ENCODE measurements at regions of chr17 and their contacts with region 1.

Region 1: GRCh38 chr17:75012346-75013091 is at the start of gene MRPL58:
- DNase-seq: peak; percentile 79
- H3K4me3 ChIP-seq: peak within 1 kb of the TSS; percentile 75 to 86 (median 83)
- H3K27ac ChIP-seq: peak within 1 kb of the TSS; percentile 79
- H3K4me1 ChIP-seq: peaks cover 19% of the 10 kb centered on the region
- H3K27me3 ChIP-seq: no peaks in the 10 kb centered on the region
- CTCF ChIP-seq: peak; percentile 13 to 67
- total RNA-seq, gene MRPL58: 22.2 to 43.2 TPM

Region 2: GRCh38 chr17:74987909-74988711 is 24.4 kb before region 1 on chr17:
- CTCF ChIA-PET with region 1: interaction called, 4 read pairs
- dilution Hi-C with region 1: no loop called
- in situ Hi-C with region 1: no loop called
- intact Hi-C with region 1: loop called (anchors 1 kb)
- DNase-seq: peak; percentile 73
- H3K4me3 ChIP-seq: peak overlapping the region; percentile 83 to 92 (median 84)
- H3K27ac ChIP-seq: peak overlapping the region; percentile 72
- H3K4me1 ChIP-seq: peaks cover 44% of the 10 kb centered on the region
- H3K27me3 ChIP-seq: no peaks in the 10 kb centered on the region
- CTCF ChIP-seq: peak in 1 of 2 donors; percentile 49

Region 3: GRCh38 chr17:74994476-74994875 is 18.0 kb before region 1 on chr17:
- CTCF ChIA-PET with region 1: interaction called, 4 read pairs
- dilution Hi-C with region 1: no loop called
- in situ Hi-C with region 1: no loop called
- intact Hi-C with region 1: loop called (anchors 1 kb)
- DNase-seq: peak; percentile 77
- H3K4me3 ChIP-seq: no peak overlapping the region
- H3K27ac ChIP-seq: peak overlapping the region; percentile 91
- H3K4me1 ChIP-seq: peaks cover 58% of the 10 kb centered on the region
- H3K27me3 ChIP-seq: no peaks in the 10 kb centered on the region
- CTCF ChIP-seq: no peak

Region 4: GRCh38 chr17:75034236-75034908 is 21.9 kb after region 1 on chr17:
- CTCF ChIA-PET with region 1: no interaction called
- dilution Hi-C with region 1: no loop called
- in situ Hi-C with region 1: no loop called
- intact Hi-C with region 1: loop called (anchors 1 kb)
- DNase-seq: peak; percentile 91
- H3K4me3 ChIP-seq: peak overlapping the region; percentile 57 to 85 (median 65)
- H3K27ac ChIP-seq: peak overlapping the region; percentile 86
- H3K4me1 ChIP-seq: peaks cover 15% of the 10 kb centered on the region
- H3K27me3 ChIP-seq: no peaks in the 10 kb centered on the region
- CTCF ChIP-seq: peak in 1 of 2 donors; percentile 36

Region 5: DNA sequence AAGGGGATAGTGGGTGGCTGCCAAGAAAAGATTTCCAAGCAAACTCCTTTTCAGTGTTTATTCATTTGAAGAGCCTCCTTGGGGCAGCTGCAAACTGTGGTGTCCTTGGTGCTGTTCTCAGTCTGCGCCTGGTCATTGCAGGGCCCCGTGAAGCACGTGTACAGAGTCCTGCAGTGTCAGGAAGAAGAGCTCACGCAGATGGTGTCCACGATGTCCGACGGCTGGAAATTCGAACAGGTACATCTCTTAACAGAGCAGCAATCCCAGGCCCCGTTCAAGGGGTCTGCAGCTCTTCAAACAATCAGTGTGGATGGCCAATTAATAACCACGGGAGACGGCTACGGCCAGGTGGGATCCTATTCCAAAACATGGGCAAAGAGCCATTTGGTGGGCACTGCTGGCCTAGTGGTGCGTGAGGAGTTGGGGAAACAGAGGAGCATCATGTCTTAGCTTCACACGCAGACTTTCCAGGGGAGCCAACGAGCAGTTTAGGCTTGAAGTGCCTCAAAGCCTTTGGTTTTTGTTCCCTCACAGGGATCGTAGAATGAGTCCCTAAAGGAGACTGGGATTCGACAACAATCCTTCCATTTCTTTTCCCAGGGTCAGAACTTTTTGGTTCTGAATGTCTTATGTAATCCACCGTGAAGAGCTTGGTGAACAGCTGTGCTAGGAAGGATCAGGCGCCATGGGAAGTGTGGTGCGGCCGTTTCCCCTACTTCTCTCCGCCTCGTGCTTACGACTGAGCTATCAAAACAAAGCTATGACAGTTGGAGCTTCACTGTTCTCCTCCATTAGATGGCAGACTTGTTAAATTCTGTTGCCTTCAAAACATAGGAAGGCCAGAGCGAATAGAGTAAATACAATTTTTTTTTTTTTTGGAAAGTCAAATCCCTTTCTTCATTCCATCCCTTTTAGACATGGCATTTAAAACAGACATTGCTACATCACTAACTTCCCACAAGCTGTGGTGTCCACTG is 47.1 kb after region 1 on chr17:
- CTCF ChIA-PET with region 1: interaction called, 10 read pairs
- dilution Hi-C with region 1: no loop called
- in situ Hi-C with region 1: no loop called
- intact Hi-C with region 1: no loop called
- DNase-seq: no peak
- H3K4me3 ChIP-seq: no peak overlapping the region
- H3K27ac ChIP-seq: no peak overlapping the region
- H3K4me1 ChIP-seq: no peaks in the 10 kb centered on the region
- H3K27me3 ChIP-seq: no peaks in the 10 kb centered on the region
- CTCF ChIP-seq: peak; percentile 13 to 31